ENCODE measurements at regions of chr5 and their contacts with region 1.

Region 1: GRCh38 chr5:81751009-81751835 is at the start of gene SSBP2:
- DNase-seq: peak; percentile 69
- ATAC-seq: peak; percentile 89
- H3K4me3 ChIP-seq: peak within 1 kb of the TSS; percentile 60 to 75 (median 73); a peak in 5 of 6 replicates
- H3K27ac ChIP-seq: no peak within 1 kb of the TSS
- H3K4me1 ChIP-seq: no peaks in the 10 kb centered on the region
- H3K27me3 ChIP-seq: peaks cover 0 to 26% of the 10 kb centered on the region in 2 experiments; a peak in 4 of 5 replicates
- CTCF ChIP-seq: no peak
- EP300 ChIP-seq: peak in 1 of 2 experiments; percentile 95; a peak in 2 of 4 replicates
- POLR2A ChIP-seq: no peak
- RAD21 ChIP-seq: no peak
- total RNA-seq, gene SSBP2: not detected in 2 replicates

Region 2: DNA sequence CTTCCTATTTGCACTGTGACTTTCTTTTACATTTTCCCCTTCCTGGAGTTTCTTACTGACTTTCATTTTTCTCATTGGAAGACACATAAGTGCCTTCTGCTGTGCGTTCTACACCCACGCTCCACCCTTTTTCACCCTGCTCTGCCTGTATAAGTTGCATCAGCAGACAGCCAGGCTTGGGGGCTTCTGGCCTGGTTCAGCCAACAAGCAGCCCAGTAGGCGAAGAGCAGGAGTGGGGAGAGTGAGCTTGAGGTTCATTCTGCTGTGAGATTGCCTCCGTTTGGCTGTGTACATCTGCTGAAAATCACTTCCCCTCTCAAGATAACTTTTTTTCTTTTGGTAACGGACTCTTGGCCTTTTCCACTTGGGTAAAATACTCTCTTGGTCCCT is 752.6 kb before region 1 on chr5:
- CTCF ChIA-PET with region 1: no interaction called
- POLR2A ChIA-PET with region 1: no interaction called
- in situ Hi-C with region 1: no loop called
- intact Hi-C with region 1: no loop called
- DNase-seq: no peak
- ATAC-seq: no peak
- H3K4me3 ChIP-seq: no peak overlapping the region
- H3K27ac ChIP-seq: no peak overlapping the region
- H3K4me1 ChIP-seq: peaks cover 8% of the 10 kb centered on the region
- H3K27me3 ChIP-seq: no peaks in the 10 kb centered on the region
- CTCF ChIP-seq: no peak
- EP300 ChIP-seq: no peak
- POLR2A ChIP-seq: no peak
- RAD21 ChIP-seq: no peak

Region 3: GRCh38 chr5:81601919-81602318 is 149.3 kb before region 1 on chr5:
- CTCF ChIA-PET with region 1: no interaction called
- POLR2A ChIA-PET with region 1: no interaction called
- in situ Hi-C with region 1: no loop called
- intact Hi-C with region 1: no loop called
- DNase-seq: no peak
- ATAC-seq: no peak
- H3K4me3 ChIP-seq: no peak overlapping the region
- H3K27ac ChIP-seq: no peak overlapping the region
- H3K4me1 ChIP-seq: peaks cover 6% of the 10 kb centered on the region; the same call in 1 of the 2 replicates
- H3K27me3 ChIP-seq: no peaks in the 10 kb centered on the region
- CTCF ChIP-seq: no peak
- EP300 ChIP-seq: no peak
- POLR2A ChIP-seq: no peak
- RAD21 ChIP-seq: no peak

Region 4: DNA sequence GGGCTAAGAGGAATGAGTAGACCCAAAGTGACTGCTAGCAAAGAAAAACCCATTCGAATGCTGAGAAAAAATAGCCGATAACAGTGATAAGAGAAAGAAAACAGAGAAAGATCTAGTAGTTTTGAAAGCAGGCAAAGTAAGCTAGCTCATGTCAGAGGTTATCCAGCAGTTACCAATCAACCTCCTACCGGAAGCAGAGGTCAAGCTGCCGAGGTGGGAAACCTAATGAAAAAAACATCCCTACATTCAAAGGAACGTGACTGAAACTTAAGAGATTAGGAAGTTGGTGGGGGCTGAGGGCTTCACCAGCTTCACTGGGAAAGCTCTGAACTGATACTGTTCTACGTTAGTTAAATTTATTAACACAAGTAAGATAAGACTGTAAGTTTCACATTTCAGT is 32.9 kb before region 1 on chr5:
- CTCF ChIA-PET with region 1: no interaction called
- POLR2A ChIA-PET with region 1: no interaction called
- in situ Hi-C with region 1: no loop called
- intact Hi-C with region 1: no loop called
- DNase-seq: no peak
- ATAC-seq: no peak
- H3K4me3 ChIP-seq: no peak overlapping the region
- H3K27ac ChIP-seq: no peak overlapping the region
- H3K4me1 ChIP-seq: no peaks in the 10 kb centered on the region
- H3K27me3 ChIP-seq: no peaks in the 10 kb centered on the region
- CTCF ChIP-seq: no peak
- EP300 ChIP-seq: no peak
- POLR2A ChIP-seq: no peak
- RAD21 ChIP-seq: no peak

Region 5: GRCh38 chr5:81851481-81852178 is 100.4 kb after region 1 on chr5:
- CTCF ChIA-PET with region 1: no interaction called
- POLR2A ChIA-PET with region 1: interaction called, 12 read pairs
- in situ Hi-C with region 1: no loop called
- intact Hi-C with region 1: loop called (anchors 1 kb)
- DNase-seq: peak; percentile 58
- ATAC-seq: peak; percentile 97
- H3K4me3 ChIP-seq: peak overlapping the region in 2 of 3 experiments; percentile 32 to 56; a peak in 4 of 6 replicates
- H3K27ac ChIP-seq: no peak overlapping the region
- H3K4me1 ChIP-seq: 0 out of 2 replicates have a peak, but pooled peaks cover 8% of the 10 kb centered on the region
- H3K27me3 ChIP-seq: peaks cover 3 to 15% of the 10 kb centered on the region in 2 experiments; a peak in 3 of 5 replicates
- CTCF ChIP-seq: no peak
- EP300 ChIP-seq: peak in 1 of 2 experiments; percentile 97; a peak in 2 of 4 replicates
- POLR2A ChIP-seq: no peak
- RAD21 ChIP-seq: 0 out of 2 replicates have a peak, but pooled peaks have one; percentile 30

Region 6: GRCh38 chr5:81859624-81860023 is 108.4 kb after region 1 on chr5:
- CTCF ChIA-PET with region 1: no interaction called
- POLR2A ChIA-PET with region 1: no interaction called
- in situ Hi-C with region 1: loop called (anchors 5 kb)
- intact Hi-C with region 1: no loop called
- DNase-seq: no peak
- ATAC-seq: no peak
- H3K4me3 ChIP-seq: no peak overlapping the region
- H3K27ac ChIP-seq: no peak overlapping the region
- H3K4me1 ChIP-seq: no peaks in the 10 kb centered on the region
- H3K27me3 ChIP-seq: peaks cover 0 to 6% of the 10 kb centered on the region in 2 experiments; a peak in 1 of 5 replicates
- CTCF ChIP-seq: no peak
- EP300 ChIP-seq: no peak
- POLR2A ChIP-seq: no peak
- RAD21 ChIP-seq: no peak

Region 7: DNA sequence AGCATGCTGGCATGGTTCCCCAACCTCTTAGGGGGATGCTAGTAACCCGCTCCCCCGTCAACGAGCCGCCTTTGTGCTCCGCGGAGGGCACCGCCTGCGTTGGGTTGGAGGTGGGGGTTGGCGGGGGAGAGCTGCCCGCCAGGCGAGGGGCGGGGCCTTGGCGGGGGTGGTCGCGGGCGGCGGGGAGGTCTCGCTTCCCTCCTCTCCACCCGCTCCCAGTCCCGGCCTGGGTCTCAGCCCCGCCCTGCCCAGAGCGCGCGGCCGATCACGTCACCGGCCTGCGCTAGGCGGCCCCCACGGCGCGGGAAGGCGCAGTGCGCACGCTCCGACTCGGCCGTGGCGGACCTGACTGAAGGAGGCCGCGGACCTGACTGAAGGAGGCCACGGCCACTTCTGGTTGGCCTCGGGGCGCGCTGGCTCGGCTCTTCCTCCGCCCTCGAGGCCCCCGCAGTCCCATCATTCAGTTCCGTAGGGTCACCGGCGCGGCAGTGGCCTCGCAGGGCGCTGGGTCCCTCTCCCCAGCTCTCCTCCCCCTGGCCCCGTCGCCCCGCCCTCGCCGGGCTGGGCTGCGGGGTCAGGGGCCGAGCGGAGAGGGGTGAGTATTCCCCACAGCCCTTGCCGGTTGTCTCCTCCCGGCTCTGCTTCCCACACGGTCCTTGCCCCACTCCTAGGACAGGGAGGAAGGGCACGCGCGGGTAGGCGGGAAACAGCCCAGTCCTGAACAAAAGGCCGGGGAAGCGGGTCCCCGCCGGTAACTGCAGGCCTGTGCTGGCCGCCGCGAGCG is 220.7 kb after region 1 on chr5 and contains the start of gene ATG10:
- CTCF ChIA-PET with region 1: no interaction called
- POLR2A ChIA-PET with region 1: no interaction called
- in situ Hi-C with region 1: no loop called
- intact Hi-C with region 1: loop called (anchors 5 kb)
- DNase-seq: peak; percentile 73
- ATAC-seq: peak; percentile 97
- H3K4me3 ChIP-seq: peak within 1 kb of the TSS; percentile 73 to 86 (median 84)
- H3K27ac ChIP-seq: peak within 1 kb of the TSS; percentile 95
- H3K4me1 ChIP-seq: peaks cover 26% of the 10 kb centered on the region; the same call in 1 of the 2 replicates
- H3K27me3 ChIP-seq: no peaks in the 10 kb centered on the region; a peak in 1 of 5 replicates
- CTCF ChIP-seq: no peak
- EP300 ChIP-seq: no peak
- POLR2A ChIP-seq: peak; percentile 82 to 91
- RAD21 ChIP-seq: no peak; the same call in none of the 2 replicates
- total RNA-seq, gene ATG10: 5.6 and 5.7 TPM in 2 replicates

Measured in HepG2 (cell line).